ENCODE measurements at regions of chr14 and their contacts with region 1.

Region 1: GRCh38 chr14:104826189-104826860 is 25.4 kb downstream of the ZBTB42 start:
- DNase-seq: peak; percentile 60
- ATAC-seq: peak; percentile 94
- H3K4me3 ChIP-seq: peak overlapping the region; percentile 88
- H3K27ac ChIP-seq: peak overlapping the region; percentile 52; the same call in 1 of the 2 replicates
- H3K4me1 ChIP-seq: peaks cover 7% of the 10 kb centered on the region
- H3K27me3 ChIP-seq: no peaks in the 10 kb centered on the region; the same call in 1 of the 2 replicates
- CTCF ChIP-seq: peak; percentile 73
- POLR2A ChIP-seq: no peak
- RAD21 ChIP-seq: peak; percentile 52

Region 2: DNA sequence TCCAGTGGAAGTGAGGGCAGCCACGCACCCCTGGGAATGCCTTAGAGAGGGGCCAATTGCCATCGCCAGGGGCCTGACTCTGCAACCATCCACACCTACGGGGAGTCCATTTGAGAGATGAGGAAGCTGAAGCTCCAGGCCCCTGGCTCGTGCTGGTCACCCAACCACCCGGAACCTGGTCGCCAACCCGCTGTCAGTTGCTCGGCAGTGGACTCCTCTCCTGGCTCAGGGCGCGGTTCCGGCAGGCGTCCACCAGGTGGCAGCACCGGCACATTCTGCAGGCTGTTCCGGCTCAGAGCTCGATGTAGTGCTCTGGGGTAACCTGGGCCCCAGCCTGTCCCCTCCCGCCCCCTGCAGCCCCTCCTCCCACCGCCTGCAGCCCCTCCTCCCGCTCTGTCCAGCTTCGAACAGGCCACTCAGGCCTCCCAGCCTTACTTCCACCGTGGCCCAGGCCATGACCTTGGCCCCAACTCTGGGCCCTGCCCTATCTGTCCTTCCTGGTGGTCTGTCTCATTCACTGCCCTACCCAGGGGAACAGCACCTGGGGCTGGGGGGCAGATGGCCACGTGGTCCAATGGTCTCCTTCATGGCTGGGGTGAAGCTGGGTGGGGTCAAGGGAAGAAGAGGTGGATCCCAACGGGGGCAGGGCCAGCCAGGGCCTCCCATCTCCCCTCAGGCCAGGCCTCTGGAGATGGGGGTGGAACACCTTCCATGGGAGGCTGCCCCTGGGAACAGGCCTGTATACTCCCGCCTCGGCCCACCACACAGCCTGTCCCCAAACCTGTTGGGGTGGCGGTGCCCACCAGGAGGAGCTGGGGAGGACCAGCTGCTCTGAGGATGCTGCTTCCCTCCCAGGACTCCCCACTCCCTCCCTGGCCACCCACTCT is 57.6 kb before region 1 on chr14:
- CTCF ChIA-PET with region 1: interaction called, 4 read pairs
- POLR2A ChIA-PET with region 1: no interaction called
- dilution Hi-C with region 1: no loop called
- in situ Hi-C with region 1: loop called (anchors 5 kb)
- intact Hi-C with region 1: loop called (anchors 1 kb)
- DNase-seq: peak; percentile 72
- ATAC-seq: peak; percentile 96
- H3K4me3 ChIP-seq: no peak overlapping the region
- H3K27ac ChIP-seq: peak overlapping the region; percentile 43; the same call in 1 of the 2 replicates
- H3K4me1 ChIP-seq: peaks cover 5% of the 10 kb centered on the region
- H3K27me3 ChIP-seq: no peaks in the 10 kb centered on the region
- CTCF ChIP-seq: peak; percentile 87
- POLR2A ChIP-seq: 0 out of 2 replicates have a peak, but pooled peaks have one; percentile 40
- RAD21 ChIP-seq: peak; percentile 87

Region 3: GRCh38 chr14:104865644-104866441 is 39.5 kb after region 1 on chr14:
- CTCF ChIA-PET with region 1: no interaction called
- POLR2A ChIA-PET with region 1: no interaction called
- dilution Hi-C with region 1: no loop called
- in situ Hi-C with region 1: no loop called
- intact Hi-C with region 1: loop called (anchors 5 kb)
- DNase-seq: peak; percentile 67
- ATAC-seq: peak; percentile 88
- H3K4me3 ChIP-seq: peak overlapping the region; percentile 97
- H3K27ac ChIP-seq: peak overlapping the region; percentile 70
- H3K4me1 ChIP-seq: peaks cover 14% of the 10 kb centered on the region
- H3K27me3 ChIP-seq: peaks cover 26% of the 10 kb centered on the region
- CTCF ChIP-seq: no peak
- POLR2A ChIP-seq: peak; percentile 80
- RAD21 ChIP-seq: no peak

Region 4: GRCh38 chr14:105020815-105021655 is 194.7 kb after region 1 on chr14 and contains the start of gene CDCA4:
- CTCF ChIA-PET with region 1: no interaction called
- POLR2A ChIA-PET with region 1: no interaction called
- dilution Hi-C with region 1: no loop called
- in situ Hi-C with region 1: no loop called
- intact Hi-C with region 1: no loop called
- DNase-seq: peak; percentile 93
- ATAC-seq: peak; percentile 91
- H3K4me3 ChIP-seq: peak within 1 kb of the TSS; percentile 91
- H3K27ac ChIP-seq: peak within 1 kb of the TSS; percentile 89
- H3K4me1 ChIP-seq: peaks cover 15% of the 10 kb centered on the region
- H3K27me3 ChIP-seq: no peaks in the 10 kb centered on the region
- CTCF ChIP-seq: no peak
- POLR2A ChIP-seq: peak; percentile 84
- RAD21 ChIP-seq: no peak
- total RNA-seq, gene CDCA4: 17.7 and 19.7 TPM in 2 replicates